CD4-positive, alpha-beta memory T cell (primary cell): ENCODE measurements at regions of chr4 and their contacts with region 1.

Region 1: DNA sequence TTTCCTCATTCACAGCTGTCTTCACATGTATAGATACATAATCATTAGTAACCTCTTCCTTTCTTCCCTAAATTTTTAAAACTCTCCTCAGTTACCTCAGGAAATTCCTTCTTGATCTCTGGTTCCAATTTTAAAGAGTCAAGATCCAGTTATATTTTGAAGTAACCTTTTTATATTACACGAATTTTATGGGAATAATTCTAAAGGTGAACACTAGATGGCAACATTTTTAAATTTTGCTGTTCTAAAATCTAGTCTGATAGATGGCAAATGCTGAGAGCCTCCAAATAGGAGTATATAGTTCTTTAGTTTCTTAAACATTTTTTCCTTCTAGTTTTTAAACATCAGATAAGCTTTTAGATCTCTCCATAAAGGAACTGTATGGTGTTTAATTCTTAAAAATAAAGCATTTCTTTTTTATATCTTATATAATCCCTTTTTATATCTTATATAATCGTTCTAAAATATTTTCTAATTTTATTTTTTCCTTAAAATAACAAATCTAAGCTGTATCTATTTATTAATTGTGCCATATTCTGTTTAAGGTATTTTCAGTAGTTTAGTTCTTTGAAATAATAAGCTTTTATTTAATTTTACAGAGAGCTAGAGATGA is 37.9 kb upstream of the PAPSS1 start:
- DNase-seq: peak in 4 of 5 donors; percentile 16 to 32 (median 20)
- H3K4me3 ChIP-seq: no peak overlapping the region
- H3K4me3 Mint-ChIP-seq: no peak overlapping the region
- H3K27ac ChIP-seq: no peak overlapping the region
- H3K27ac Mint-ChIP-seq: no peak overlapping the region
- H3K4me1 ChIP-seq: no peaks in the 10 kb centered on the region
- H3K4me1 Mint-ChIP-seq: peaks cover 0 to 4% (median 0%) of the 10 kb centered on the region in 4 donors
- H3K27me3 ChIP-seq: peaks cover 8% of the 10 kb centered on the region
- H3K27me3 Mint-ChIP-seq: peaks cover 2% of the 10 kb centered on the region in 2 donors

Region 2: DNA sequence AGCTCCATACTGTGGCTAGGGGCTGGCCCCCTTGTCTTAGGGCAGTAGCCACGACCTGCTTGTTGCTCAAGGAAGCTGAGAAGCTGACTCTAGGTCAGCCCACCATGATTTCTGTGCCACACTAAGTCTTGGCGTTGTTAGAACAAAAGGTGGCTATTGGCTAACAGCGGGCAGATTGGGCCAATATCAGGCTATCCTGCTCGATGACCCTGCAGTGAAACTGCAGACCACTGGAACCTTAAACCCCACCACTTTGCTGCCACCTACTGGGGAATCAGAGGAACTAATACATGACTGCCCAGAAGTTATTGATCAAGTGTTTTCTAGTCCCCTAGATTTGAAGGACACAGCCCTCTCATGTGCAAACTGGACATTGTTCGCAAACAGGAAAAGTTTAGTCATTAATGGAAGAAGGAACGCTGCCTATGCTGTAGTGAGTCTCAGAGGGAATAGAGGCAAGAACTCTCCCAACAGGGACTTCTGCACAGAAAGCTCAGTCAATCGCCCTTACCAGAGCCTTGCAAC is 21.0 kb before region 1 on chr4:
- CTCF ChIA-PET with region 1: interaction called, 15 read pairs
- POLR2A ChIA-PET with region 1: no interaction called
- intact Hi-C with region 1: no loop called
- DNase-seq: peak; percentile 42 to 50 (median 46)
- H3K4me3 ChIP-seq: no peak overlapping the region
- H3K4me3 Mint-ChIP-seq: no peak overlapping the region
- H3K27ac ChIP-seq: no peak overlapping the region
- H3K27ac Mint-ChIP-seq: peak overlapping the region in 2 of 7 donors; percentile 43 to 69
- H3K4me1 ChIP-seq: no peaks in the 10 kb centered on the region
- H3K4me1 Mint-ChIP-seq: no peaks in the 10 kb centered on the region
- H3K27me3 ChIP-seq: no peaks in the 10 kb centered on the region
- H3K27me3 Mint-ChIP-seq: no peaks in the 10 kb centered on the region

Region 3: DNA sequence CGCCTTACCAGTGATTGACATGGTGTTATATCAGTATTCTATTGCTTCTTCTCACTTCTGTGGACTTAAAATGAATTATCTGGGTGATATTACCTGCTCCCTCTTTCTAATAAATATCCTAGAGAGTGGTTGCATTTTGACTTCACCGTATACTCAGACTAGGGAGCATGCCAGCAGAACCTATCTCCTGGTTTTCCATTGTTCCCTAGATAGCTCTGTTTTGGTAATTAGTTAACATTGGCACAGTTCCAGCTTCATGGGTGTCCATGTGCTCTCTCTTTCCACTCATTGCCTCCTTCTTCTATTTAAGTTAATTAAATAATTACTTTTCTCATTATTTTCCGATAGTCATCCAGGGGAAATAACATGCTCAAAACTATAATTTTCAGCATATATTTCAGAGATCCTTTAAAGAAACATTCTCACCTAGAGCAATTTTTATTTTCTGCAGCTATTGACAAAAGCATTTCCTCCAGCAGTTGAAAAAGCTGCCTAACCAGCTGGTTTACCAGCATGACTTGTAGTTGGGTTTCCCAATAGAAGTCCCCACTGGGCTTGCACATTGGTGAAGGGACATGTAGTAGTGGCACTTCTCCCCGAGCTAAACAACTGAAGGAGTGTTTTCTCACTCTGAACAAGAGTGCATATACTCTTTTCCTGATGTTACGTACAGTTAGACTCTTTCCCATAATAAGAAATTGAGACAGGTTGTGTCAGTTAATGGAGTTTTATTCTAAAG is 10.1 kb before region 1 on chr4:
- CTCF ChIA-PET with region 1: interaction called, 17 read pairs
- POLR2A ChIA-PET with region 1: no interaction called
- intact Hi-C with region 1: no loop called
- DNase-seq: no peak
- H3K4me3 ChIP-seq: no peak overlapping the region
- H3K4me3 Mint-ChIP-seq: no peak overlapping the region
- H3K27ac ChIP-seq: no peak overlapping the region
- H3K27ac Mint-ChIP-seq: no peak overlapping the region
- H3K4me1 ChIP-seq: no peaks in the 10 kb centered on the region
- H3K4me1 Mint-ChIP-seq: no peaks in the 10 kb centered on the region
- H3K27me3 ChIP-seq: no peaks in the 10 kb centered on the region
- H3K27me3 Mint-ChIP-seq: peaks cover 22 to 26% of the 10 kb centered on the region in 2 donors

Region 4: DNA sequence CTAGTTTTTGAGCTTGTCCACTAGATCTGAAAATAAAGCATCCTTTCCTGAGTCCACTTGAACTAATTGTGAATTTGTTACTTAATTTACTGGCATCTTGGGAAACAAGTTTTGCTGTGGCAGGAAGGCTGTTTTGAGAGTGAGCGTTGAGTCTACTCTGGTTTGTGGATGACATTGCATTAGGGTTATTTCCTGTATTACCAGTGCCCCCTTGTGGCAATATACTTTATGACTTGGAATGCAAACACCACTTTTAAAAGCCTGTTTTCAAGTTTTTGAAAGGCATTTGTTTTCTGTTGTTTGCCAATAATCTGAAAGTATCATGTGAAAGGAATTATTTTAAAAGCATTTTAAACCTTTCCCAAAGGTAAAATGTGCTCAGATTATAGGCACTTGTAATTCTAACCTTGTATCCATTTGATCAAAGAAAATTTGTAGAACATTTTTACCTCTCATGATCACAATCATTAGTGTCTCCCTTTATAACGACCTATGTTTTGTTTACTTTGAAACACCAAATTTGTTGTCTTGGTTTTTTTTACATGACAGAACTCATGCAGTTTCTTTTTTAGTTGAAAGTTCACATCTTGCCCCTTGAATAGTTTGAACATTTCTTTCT is 155.4 kb after region 1 on chr4:
- CTCF ChIA-PET with region 1: interaction called, 10 read pairs
- POLR2A ChIA-PET with region 1: no interaction called
- intact Hi-C with region 1: loop called (anchors 1 kb)
- DNase-seq: peak; percentile 57 to 62 (median 59)
- H3K4me3 ChIP-seq: no peak overlapping the region
- H3K4me3 Mint-ChIP-seq: no peak overlapping the region
- H3K27ac ChIP-seq: no peak overlapping the region
- H3K27ac Mint-ChIP-seq: no peak overlapping the region
- H3K4me1 ChIP-seq: no peaks in the 10 kb centered on the region
- H3K4me1 Mint-ChIP-seq: peaks cover 0 to 2% (median under 1%) of the 10 kb centered on the region in 4 donors
- H3K27me3 ChIP-seq: no peaks in the 10 kb centered on the region
- H3K27me3 Mint-ChIP-seq: peaks cover 1 to 7% of the 10 kb centered on the region in 2 donors

Region 5: DNA sequence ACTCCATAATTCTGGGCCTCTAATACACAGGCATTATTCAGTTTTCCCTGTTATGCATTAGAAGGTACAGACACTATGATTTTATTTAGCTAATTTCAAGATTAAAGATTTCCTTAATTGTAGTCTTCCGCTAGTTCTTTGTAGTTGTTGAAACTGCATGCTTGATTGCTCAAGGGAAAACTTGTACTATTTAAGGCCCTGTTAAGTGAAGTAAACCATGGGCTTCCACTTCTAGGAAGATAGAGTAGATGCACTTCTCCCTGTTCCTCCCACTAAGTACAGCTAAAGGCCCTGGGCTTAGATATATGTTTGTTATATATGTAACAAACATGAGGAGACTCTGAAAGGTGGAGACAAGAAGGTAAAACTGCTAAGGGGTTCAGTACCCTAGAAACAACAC is 626.6 kb after region 1 on chr4:
- CTCF ChIA-PET with region 1: no interaction called
- POLR2A ChIA-PET with region 1: no interaction called
- intact Hi-C with region 1: no loop called
- DNase-seq: no peak
- H3K4me3 ChIP-seq: no peak overlapping the region
- H3K4me3 Mint-ChIP-seq: no peak overlapping the region
- H3K27ac ChIP-seq: no peak overlapping the region
- H3K27ac Mint-ChIP-seq: no peak overlapping the region
- H3K4me1 ChIP-seq: no peaks in the 10 kb centered on the region
- H3K4me1 Mint-ChIP-seq: peaks cover 0 to 3% (median 0%) of the 10 kb centered on the region in 4 donors
- H3K27me3 ChIP-seq: no peaks in the 10 kb centered on the region
- H3K27me3 Mint-ChIP-seq: peaks cover 0 to 4% of the 10 kb centered on the region in 2 donors

Region 6: DNA sequence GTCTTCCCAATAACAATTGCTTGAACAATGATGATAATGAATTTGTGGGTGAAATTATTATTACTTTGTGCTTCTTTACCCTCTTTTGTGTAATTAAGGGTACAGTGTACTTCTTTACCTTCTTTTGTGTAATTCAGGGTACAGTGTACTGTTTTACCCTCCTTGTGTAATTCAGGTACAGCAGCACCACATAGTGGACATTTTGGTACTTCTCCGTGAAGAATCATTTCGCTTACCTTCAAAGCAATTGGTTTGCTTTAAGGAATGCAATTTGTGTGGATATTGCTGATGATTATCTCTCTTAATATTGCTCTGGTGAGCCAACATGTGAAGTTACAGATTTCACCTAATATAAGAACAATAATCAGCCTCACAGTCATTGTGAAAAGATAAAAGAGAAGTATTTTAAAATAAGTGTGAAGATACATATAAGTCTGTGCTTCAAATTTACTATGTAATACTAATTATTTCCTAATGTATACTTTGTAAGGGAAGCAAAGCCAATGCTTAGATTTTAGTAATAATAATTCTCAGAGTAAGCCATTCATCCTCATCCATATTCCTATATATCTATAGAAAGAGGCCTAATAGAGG is 1648.5 kb after region 1 on chr4:
- CTCF ChIA-PET with region 1: no interaction called
- POLR2A ChIA-PET with region 1: no interaction called
- intact Hi-C with region 1: loop called (anchors 5 kb)
- DNase-seq: peak; percentile 35 to 51 (median 43)
- H3K4me3 ChIP-seq: no peak overlapping the region
- H3K4me3 Mint-ChIP-seq: no peak overlapping the region
- H3K27ac ChIP-seq: no peak overlapping the region
- H3K27ac Mint-ChIP-seq: no peak overlapping the region
- H3K4me1 ChIP-seq: no peaks in the 10 kb centered on the region
- H3K4me1 Mint-ChIP-seq: no peaks in the 10 kb centered on the region
- H3K27me3 ChIP-seq: no peaks in the 10 kb centered on the region
- H3K27me3 Mint-ChIP-seq: peaks cover 0 to 1% of the 10 kb centered on the region in 2 donors